HepG2 (cell line): ENCODE measurements at regions of chr2 and their contacts with region 1.

Region 1: GRCh38 chr2:189412330-189412953 is 28.8 kb upstream of the WDR75 start:
- DNase-seq: peak; percentile 39
- ATAC-seq: peak; percentile 75
- H3K4me3 ChIP-seq: no peak overlapping the region
- H3K27ac ChIP-seq: no peak overlapping the region
- H3K4me1 ChIP-seq: no peaks in the 10 kb centered on the region
- H3K27me3 ChIP-seq: no peaks in the 10 kb centered on the region
- CTCF ChIP-seq: peak; percentile 80
- EP300 ChIP-seq: no peak
- POLR2A ChIP-seq: no peak
- RAD21 ChIP-seq: peak; percentile 68

Region 2: GRCh38 chr2:187581125-187581896 is 1831.1 kb before region 1 on chr2:
- CTCF ChIA-PET with region 1: interaction called, 3 read pairs
- POLR2A ChIA-PET with region 1: no interaction called
- in situ Hi-C with region 1: no loop called
- intact Hi-C with region 1: loop called (anchors 1 kb)
- DNase-seq: peak; percentile 59
- ATAC-seq: peak; percentile 18; the same call in 1 of the 3 replicates
- H3K4me3 ChIP-seq: peak overlapping the region; percentile 21 to 60 (median 51); a peak in 5 of 6 replicates
- H3K27ac ChIP-seq: no peak overlapping the region
- H3K4me1 ChIP-seq: peaks cover 33% of the 10 kb centered on the region
- H3K27me3 ChIP-seq: no peaks in the 10 kb centered on the region
- CTCF ChIP-seq: peak; percentile 79
- EP300 ChIP-seq: no peak
- POLR2A ChIP-seq: no peak
- RAD21 ChIP-seq: no peak; the same call in 1 of the 2 replicates

Region 3: DNA sequence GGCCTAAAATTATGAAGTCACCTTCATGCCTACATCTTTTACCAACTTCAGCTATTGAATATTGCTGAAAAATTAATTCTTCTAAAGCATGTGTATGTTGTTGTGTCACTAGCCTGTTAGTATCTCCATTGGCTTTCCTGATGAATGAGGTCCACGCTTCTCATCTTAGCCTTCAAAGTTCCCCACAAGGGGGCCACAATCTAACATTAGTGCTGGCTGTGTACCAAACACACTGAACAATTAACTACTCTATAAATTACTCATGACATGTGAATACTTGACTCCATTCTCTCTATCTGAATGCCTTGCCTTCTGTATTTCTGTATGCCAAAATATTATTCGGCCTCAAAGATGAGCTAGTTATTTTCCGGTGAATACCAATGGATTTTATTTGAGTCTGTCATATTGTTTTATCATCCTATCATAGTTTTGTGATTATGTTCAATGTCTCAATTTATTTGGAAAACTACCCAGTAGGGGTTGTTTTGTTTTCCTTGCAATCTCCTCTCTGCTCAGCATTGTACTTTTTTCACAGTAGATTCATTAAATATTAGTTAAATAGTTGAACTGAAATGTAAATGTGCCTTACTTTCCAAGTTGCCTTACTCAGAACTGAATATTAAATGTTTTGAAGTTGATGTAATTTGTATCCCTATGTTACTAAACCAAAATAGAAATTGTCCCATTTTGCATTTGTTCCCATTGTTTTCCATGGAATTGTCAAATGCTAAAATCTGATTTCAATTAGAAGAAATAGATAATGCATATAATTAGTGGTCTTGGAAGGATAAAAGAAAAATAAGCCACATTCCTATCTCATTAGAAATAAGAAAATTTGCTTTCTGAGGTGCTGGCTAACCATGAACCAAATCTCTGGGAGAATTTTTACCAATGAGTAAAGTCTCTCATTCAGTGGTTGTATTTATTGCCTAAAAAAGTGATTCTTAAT is 646.6 kb before region 1 on chr2:
- CTCF ChIA-PET with region 1: interaction called, 6 read pairs
- POLR2A ChIA-PET with region 1: no interaction called
- in situ Hi-C with region 1: loop called (anchors 25 kb)
- intact Hi-C with region 1: loop called (anchors 5 kb)
- DNase-seq: peak; percentile 15
- ATAC-seq: peak; percentile 83
- H3K4me3 ChIP-seq: no peak overlapping the region
- H3K27ac ChIP-seq: no peak overlapping the region
- H3K4me1 ChIP-seq: no peaks in the 10 kb centered on the region
- H3K27me3 ChIP-seq: no peaks in the 10 kb centered on the region
- CTCF ChIP-seq: peak; percentile 54
- EP300 ChIP-seq: no peak
- POLR2A ChIP-seq: no peak
- RAD21 ChIP-seq: no peak

Region 4: GRCh38 chr2:188983427-188984064 is 428.9 kb before region 1 on chr2:
- CTCF ChIA-PET with region 1: no interaction called
- POLR2A ChIA-PET with region 1: no interaction called
- in situ Hi-C with region 1: loop called (anchors 25 kb)
- intact Hi-C with region 1: loop called (anchors 1 kb)
- DNase-seq: peak; percentile 41
- ATAC-seq: peak; percentile 80
- H3K4me3 ChIP-seq: no peak overlapping the region
- H3K27ac ChIP-seq: no peak overlapping the region
- H3K4me1 ChIP-seq: no peaks in the 10 kb centered on the region
- H3K27me3 ChIP-seq: no peaks in the 10 kb centered on the region
- CTCF ChIP-seq: peak; percentile 47
- EP300 ChIP-seq: no peak
- POLR2A ChIP-seq: no peak
- RAD21 ChIP-seq: no peak

Region 5: GRCh38 chr2:189142893-189143759 is 269.3 kb before region 1 on chr2:
- CTCF ChIA-PET with region 1: interaction called, 62 read pairs
- POLR2A ChIA-PET with region 1: no interaction called
- in situ Hi-C with region 1: no loop called
- intact Hi-C with region 1: loop called (anchors 1 kb)
- DNase-seq: peak; percentile 76
- ATAC-seq: peak; percentile 100
- H3K4me3 ChIP-seq: no peak overlapping the region
- H3K27ac ChIP-seq: no peak overlapping the region
- H3K4me1 ChIP-seq: no peaks in the 10 kb centered on the region
- H3K27me3 ChIP-seq: no peaks in the 10 kb centered on the region
- CTCF ChIP-seq: peak; percentile 87
- EP300 ChIP-seq: no peak
- POLR2A ChIP-seq: no peak
- RAD21 ChIP-seq: peak; percentile 79